ENCODE measurements at regions of chr7 and their contacts with region 1.

Region 1: GRCh38 chr7:149586646-149587332 is 89.2 kb upstream of the ZNF746 start:
- DNase-seq: no peak
- H3K4me3 ChIP-seq: no peak overlapping the region
- H3K27ac ChIP-seq: no peak overlapping the region
- H3K4me1 ChIP-seq: no peaks in the 10 kb centered on the region
- H3K27me3 ChIP-seq: no peaks in the 10 kb centered on the region
- CTCF ChIP-seq: no peak

Region 2: DNA sequence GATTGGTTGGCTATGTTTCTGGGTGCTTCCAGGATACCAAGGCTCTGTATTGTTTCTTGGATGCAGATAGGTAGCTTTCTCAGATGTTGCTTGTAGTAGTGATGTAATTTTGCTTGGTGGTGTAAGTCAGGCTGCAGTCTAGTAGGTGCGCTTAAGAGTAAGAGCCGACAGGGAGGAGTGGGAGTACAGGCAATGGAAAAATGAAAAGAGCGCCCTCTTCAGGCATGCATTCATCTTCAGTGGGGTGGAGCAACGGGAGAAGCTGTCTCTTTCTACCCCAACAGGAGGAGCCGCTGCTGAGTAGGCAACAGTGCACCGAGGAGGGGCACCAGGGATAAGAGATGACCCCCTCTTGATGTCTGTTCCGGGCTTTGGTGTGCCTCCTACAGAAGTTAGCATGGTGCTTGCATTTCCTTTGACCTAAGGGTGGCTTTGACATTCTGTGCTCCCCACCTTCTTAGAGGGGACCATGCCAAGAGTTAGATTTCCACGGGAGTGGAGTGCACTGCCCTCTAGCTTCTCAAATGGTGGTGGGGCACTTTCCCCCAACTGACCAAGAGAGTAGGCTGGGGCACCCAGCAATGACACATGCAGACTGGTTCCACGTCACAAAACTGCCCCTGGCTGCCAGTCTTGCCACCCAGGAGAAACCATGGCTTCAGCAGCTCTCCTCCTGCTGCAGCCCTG is 268.7 kb before region 1 on chr7:
- CTCF ChIA-PET with region 1: no interaction called
- POLR2A ChIA-PET with region 1: no interaction called
- intact Hi-C with region 1: no loop called
- DNase-seq: peak; percentile 8
- H3K4me3 ChIP-seq: no peak overlapping the region
- H3K27ac ChIP-seq: no peak overlapping the region
- H3K4me1 ChIP-seq: no peaks in the 10 kb centered on the region
- H3K27me3 ChIP-seq: peaks cover 7% of the 10 kb centered on the region
- CTCF ChIP-seq: peak; percentile 35; the same call in 1 of the 2 replicates

Region 3: GRCh38 chr7:149608168-149608567 is 21.4 kb after region 1 on chr7:
- CTCF ChIA-PET with region 1: no interaction called
- POLR2A ChIA-PET with region 1: no interaction called
- intact Hi-C with region 1: loop called (anchors 1 kb)
- DNase-seq: no peak
- H3K4me3 ChIP-seq: no peak overlapping the region
- H3K27ac ChIP-seq: no peak overlapping the region
- H3K4me1 ChIP-seq: no peaks in the 10 kb centered on the region
- H3K27me3 ChIP-seq: no peaks in the 10 kb centered on the region
- CTCF ChIP-seq: no peak

Measured in A673 (cell line).